ENCODE measurements at regions of chr13 and their contacts with region 1.

Region 1: DNA sequence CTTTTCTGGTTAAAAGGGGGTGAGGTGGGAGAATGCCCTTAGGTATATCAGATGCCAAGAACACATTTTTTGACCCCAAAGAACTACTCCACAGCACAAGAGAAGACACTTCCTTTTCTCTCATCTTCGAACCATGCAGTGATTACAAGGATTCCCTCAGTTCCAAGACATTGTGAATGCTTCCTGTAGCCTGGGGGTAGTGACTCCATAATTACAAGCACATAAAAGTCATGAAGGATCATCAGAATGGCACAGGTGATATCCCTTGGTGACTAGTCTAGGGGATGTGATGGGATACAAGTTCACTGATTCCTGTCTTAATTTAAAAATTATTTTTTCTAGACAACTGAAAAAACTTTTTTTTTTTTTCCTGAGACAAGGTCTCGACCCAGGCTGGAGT is 78.0 kb downstream of the ZC3H13 start:
- DNase-seq: no peak
- ATAC-seq: no peak
- H3K4me3 ChIP-seq: no peak overlapping the region
- H3K27ac ChIP-seq: no peak overlapping the region
- H3K4me1 ChIP-seq: no peaks in the 10 kb centered on the region
- H3K27me3 ChIP-seq: no peaks in the 10 kb centered on the region
- CTCF ChIP-seq: no peak
- POLR2A ChIP-seq: no peak
- RAD21 ChIP-seq: no peak

Region 2: DNA sequence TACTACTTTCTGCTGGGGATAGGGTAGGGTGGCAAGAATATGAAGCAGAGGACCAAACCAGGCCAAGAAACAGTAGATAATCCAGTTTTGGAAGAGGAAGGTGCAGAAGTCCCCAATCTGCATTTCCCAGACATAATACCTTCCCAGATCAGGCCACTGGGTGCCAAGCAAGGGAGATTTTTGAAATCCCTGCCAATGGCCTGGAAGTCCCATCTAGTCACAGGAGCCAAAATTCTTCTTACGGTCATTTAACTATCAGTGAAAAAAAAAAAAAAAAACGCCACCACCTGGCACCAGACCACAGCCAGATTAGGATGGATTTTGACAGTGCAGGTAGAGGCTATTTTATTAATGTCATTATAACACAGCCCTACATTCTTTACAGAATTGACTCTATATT is 20.3 kb after region 1 on chr13:
- CTCF ChIA-PET with region 1: no interaction called
- POLR2A ChIA-PET with region 1: no interaction called
- dilution Hi-C with region 1: no loop called
- in situ Hi-C with region 1: no loop called
- intact Hi-C with region 1: loop called (anchors 1 kb)
- DNase-seq: no peak
- ATAC-seq: no peak
- H3K4me3 ChIP-seq: no peak overlapping the region
- H3K27ac ChIP-seq: no peak overlapping the region
- H3K4me1 ChIP-seq: no peaks in the 10 kb centered on the region
- H3K27me3 ChIP-seq: no peaks in the 10 kb centered on the region
- CTCF ChIP-seq: no peak
- POLR2A ChIP-seq: no peak
- RAD21 ChIP-seq: no peak

Region 3: GRCh38 chr13:46015366-46015765 is 40.9 kb after region 1 on chr13:
- CTCF ChIA-PET with region 1: no interaction called
- POLR2A ChIA-PET with region 1: no interaction called
- dilution Hi-C with region 1: no loop called
- in situ Hi-C with region 1: no loop called
- intact Hi-C with region 1: loop called (anchors 5 kb)
- DNase-seq: no peak
- ATAC-seq: no peak
- H3K4me3 ChIP-seq: no peak overlapping the region
- H3K27ac ChIP-seq: no peak overlapping the region
- H3K4me1 ChIP-seq: no peaks in the 10 kb centered on the region
- H3K27me3 ChIP-seq: no peaks in the 10 kb centered on the region
- CTCF ChIP-seq: no peak
- POLR2A ChIP-seq: no peak
- RAD21 ChIP-seq: no peak